ENCODE measurements at regions of chr18 and their contacts with region 1.

Region 1: GRCh38 chr18:48675352-48675761 is 136.5 kb downstream of the CTIF start:
- DNase-seq: peak; percentile 51
- ATAC-seq: peak; percentile 95
- H3K4me3 ChIP-seq: no peak overlapping the region
- H3K27ac ChIP-seq: no peak overlapping the region; the same call in 1 of the 2 replicates
- H3K4me1 ChIP-seq: peaks cover 0 to 7% of the 10 kb centered on the region in 2 experiments; a peak in 2 of 4 replicates
- H3K27me3 ChIP-seq: no peaks in the 10 kb centered on the region
- CTCF ChIP-seq: peak; percentile 74 to 93 (median 89)
- POLR2A ChIP-seq: no peak
- RAD21 ChIP-seq: peak; percentile 93

Region 2: DNA sequence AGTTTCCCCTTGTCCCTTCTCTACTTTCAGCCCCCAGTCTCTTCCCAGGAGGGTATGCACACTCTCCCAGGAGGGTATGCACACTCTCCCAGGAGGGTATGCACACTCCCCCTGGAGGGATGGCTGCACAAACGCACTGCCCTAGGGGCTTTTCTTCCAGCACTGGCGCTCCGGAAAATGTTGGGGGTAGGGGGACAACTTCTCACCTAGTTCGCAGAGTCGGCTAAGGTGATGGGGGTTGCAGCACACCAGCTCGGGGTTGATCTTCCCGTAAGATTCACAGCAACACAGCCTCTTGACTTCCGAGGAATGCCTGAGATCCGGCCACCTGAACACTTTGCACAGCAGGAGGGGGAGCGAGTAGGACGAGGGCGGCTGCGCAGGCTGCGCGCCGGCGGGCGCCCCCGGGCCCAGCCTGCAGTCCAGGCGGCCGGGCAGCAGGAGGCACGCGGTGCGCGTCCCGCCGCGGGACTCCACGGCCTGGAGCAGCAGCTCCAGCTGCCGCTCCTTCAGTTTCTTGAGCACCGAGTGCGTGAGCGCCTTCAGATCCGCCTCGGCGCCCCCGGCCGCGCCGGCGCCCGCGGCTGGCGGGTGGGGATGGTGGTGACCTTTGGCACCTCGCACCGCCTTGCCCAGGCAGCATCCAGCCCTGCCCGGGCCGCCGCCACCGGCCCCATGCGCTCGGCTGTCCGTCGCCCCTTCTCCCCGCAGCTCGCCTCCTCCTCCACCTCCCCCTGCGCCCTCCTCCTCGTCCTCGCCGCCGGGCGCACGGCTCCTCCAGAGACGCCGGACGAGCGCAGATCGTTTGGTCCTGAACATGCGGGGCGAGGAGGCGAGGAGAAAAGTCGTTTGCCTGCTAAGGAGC is 274.5 kb after region 1 on chr18:
- CTCF ChIA-PET with region 1: no interaction called
- POLR2A ChIA-PET with region 1: no interaction called
- RAD21 ChIA-PET with region 1: no interaction called
- intact Hi-C with region 1: loop called (anchors 10 kb)
- DNase-seq: no peak
- ATAC-seq: peak; percentile 35
- H3K4me3 ChIP-seq: peak overlapping the region; percentile 37 to 65
- H3K27ac ChIP-seq: peak overlapping the region; percentile 54; the same call in 1 of the 2 replicates
- H3K4me1 ChIP-seq: peaks cover 55 to 79% of the 10 kb centered on the region in 2 experiments
- H3K27me3 ChIP-seq: peaks cover 22% of the 10 kb centered on the region; the same call in 1 of the 2 replicates
- CTCF ChIP-seq: 0 out of 6 replicates have a peak, but pooled peaks of 1 of the 3 experiments have one; percentile 1
- POLR2A ChIP-seq: no peak
- RAD21 ChIP-seq: no peak

Region 3: GRCh38 chr18:49041435-49042245 is 366.3 kb after region 1 on chr18:
- CTCF ChIA-PET with region 1: no interaction called
- POLR2A ChIA-PET with region 1: no interaction called
- RAD21 ChIA-PET with region 1: no interaction called
- intact Hi-C with region 1: loop called (anchors 2 kb)
- DNase-seq: peak; percentile 16
- ATAC-seq: peak; percentile 92
- H3K4me3 ChIP-seq: no peak overlapping the region
- H3K27ac ChIP-seq: no peak overlapping the region
- H3K4me1 ChIP-seq: no peaks in the 10 kb centered on the region
- H3K27me3 ChIP-seq: no peaks in the 10 kb centered on the region
- CTCF ChIP-seq: peak; percentile 42 to 66 (median 60); a peak in 5 of 6 replicates
- POLR2A ChIP-seq: no peak
- RAD21 ChIP-seq: peak; percentile 62

Region 4: GRCh38 chr18:49238433-49239042 is 563.2 kb after region 1 on chr18:
- CTCF ChIA-PET with region 1: interaction called, 8 read pairs
- POLR2A ChIA-PET with region 1: no interaction called
- RAD21 ChIA-PET with region 1: interaction called in 1 of 2 experiments, 5 read pairs
- intact Hi-C with region 1: loop called (anchors 1 kb)
- DNase-seq: peak; percentile 13
- ATAC-seq: peak; percentile 57; the same call in 1 of the 2 replicates
- H3K4me3 ChIP-seq: no peak overlapping the region
- H3K27ac ChIP-seq: no peak overlapping the region
- H3K4me1 ChIP-seq: no peaks in the 10 kb centered on the region
- H3K27me3 ChIP-seq: no peaks in the 10 kb centered on the region
- CTCF ChIP-seq: peak; percentile 57 to 63 (median 61)
- POLR2A ChIP-seq: no peak
- RAD21 ChIP-seq: peak; percentile 79

Region 5: GRCh38 chr18:49258938-49259337 is 583.6 kb after region 1 on chr18:
- CTCF ChIA-PET with region 1: no interaction called
- POLR2A ChIA-PET with region 1: no interaction called
- RAD21 ChIA-PET with region 1: no interaction called
- intact Hi-C with region 1: no loop called
- DNase-seq: no peak
- ATAC-seq: no peak
- H3K4me3 ChIP-seq: no peak overlapping the region
- H3K27ac ChIP-seq: no peak overlapping the region
- H3K4me1 ChIP-seq: no peaks in the 10 kb centered on the region
- H3K27me3 ChIP-seq: no peaks in the 10 kb centered on the region
- CTCF ChIP-seq: no peak
- POLR2A ChIP-seq: no peak
- RAD21 ChIP-seq: no peak

Region 6: DNA sequence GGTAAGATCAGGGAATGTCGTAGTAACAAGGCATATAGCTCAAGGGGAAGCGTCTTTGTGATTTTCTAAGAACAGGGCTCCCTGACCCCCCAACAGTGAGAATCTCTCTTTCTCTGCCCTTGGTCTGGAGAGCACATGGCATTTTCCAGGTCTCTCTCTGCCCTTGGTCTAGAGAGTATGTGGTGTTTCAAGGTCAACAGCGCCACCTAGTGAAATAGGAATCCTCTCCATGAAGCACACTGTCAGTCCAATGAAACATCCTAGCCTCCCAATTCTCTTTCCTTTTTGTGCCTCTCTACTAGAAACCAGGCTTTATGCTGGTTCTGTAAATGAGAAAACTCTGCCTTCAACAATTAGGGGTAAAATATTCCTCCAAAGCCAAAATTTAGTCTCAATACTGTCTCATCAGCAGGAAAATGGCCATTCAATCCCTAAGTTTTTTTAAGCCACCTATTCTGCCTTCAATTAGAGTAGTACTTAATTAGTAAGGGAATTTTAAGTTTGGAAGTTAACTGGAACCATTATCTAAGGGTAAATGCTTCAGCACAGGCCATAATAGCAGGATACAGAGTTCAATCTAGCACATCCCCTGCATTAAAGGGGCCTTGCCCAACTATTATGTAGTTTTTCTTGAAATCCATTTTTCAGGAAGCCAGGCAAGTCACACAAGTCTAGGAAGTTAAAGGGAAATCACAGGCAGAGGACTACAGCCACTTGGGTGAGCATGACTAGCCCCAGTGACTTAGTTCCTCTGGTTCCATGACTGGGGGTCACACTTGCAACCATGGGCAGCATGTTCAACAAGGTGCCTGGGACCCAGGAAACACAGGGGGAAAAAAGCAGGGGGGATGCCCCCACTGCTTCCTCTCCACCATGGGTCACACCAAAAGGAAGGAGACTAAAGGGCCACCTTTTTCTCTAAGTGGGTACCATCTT is 772.7 kb after region 1 on chr18:
- CTCF ChIA-PET with region 1: no interaction called
- POLR2A ChIA-PET with region 1: no interaction called
- RAD21 ChIA-PET with region 1: no interaction called
- intact Hi-C with region 1: loop called (anchors 5 kb)
- DNase-seq: peak; percentile 67
- ATAC-seq: peak; percentile 97
- H3K4me3 ChIP-seq: no peak overlapping the region
- H3K27ac ChIP-seq: no peak overlapping the region
- H3K4me1 ChIP-seq: no peaks in the 10 kb centered on the region
- H3K27me3 ChIP-seq: no peaks in the 10 kb centered on the region
- CTCF ChIP-seq: peak; percentile 49 to 80 (median 64); a peak in 5 of 6 replicates
- POLR2A ChIP-seq: no peak
- RAD21 ChIP-seq: peak; percentile 66

Region 7: GRCh38 chr18:50203801-50204604 is 1528.6 kb after region 1 on chr18:
- CTCF ChIA-PET with region 1: no interaction called
- POLR2A ChIA-PET with region 1: no interaction called
- RAD21 ChIA-PET with region 1: no interaction called
- intact Hi-C with region 1: loop called (anchors 10 kb)
- DNase-seq: peak; percentile 49
- ATAC-seq: peak; percentile 95
- H3K4me3 ChIP-seq: peak overlapping the region; percentile 28 to 43
- H3K27ac ChIP-seq: no peak overlapping the region
- H3K4me1 ChIP-seq: peaks cover 0 to 14% of the 10 kb centered on the region in 2 experiments; a peak in 1 of 4 replicates
- H3K27me3 ChIP-seq: no peaks in the 10 kb centered on the region
- CTCF ChIP-seq: peak; percentile 61 to 84 (median 74)
- POLR2A ChIP-seq: no peak
- RAD21 ChIP-seq: peak; percentile 88